ENCODE measurements at regions of chr10 and their contacts with region 1.

Region 1: GRCh38 chr10:23438550-23439441 is at the start of gene OTUD1:
- DNase-seq: peak; percentile 89 to 97 (median 95)
- H3K4me3 ChIP-seq: peak within 1 kb of the TSS; percentile 70 to 82
- H3K4me3 Mint-ChIP-seq: peak within 1 kb of the TSS; percentile 75 to 89 (median 84)
- H3K27ac ChIP-seq: peak within 1 kb of the TSS; percentile 79
- H3K27ac Mint-ChIP-seq: peak within 1 kb of the TSS; percentile 90 to 97 (median 94)
- H3K4me1 ChIP-seq: peaks cover 44% of the 10 kb centered on the region
- H3K4me1 Mint-ChIP-seq: peaks cover 30 to 44% (median 36%) of the 10 kb centered on the region in 4 donors
- H3K27me3 ChIP-seq: no peaks in the 10 kb centered on the region
- H3K27me3 Mint-ChIP-seq: no peaks in the 10 kb centered on the region
- total RNA-seq, gene OTUD1: 36.2 to 37.7 TPM

Region 2: DNA sequence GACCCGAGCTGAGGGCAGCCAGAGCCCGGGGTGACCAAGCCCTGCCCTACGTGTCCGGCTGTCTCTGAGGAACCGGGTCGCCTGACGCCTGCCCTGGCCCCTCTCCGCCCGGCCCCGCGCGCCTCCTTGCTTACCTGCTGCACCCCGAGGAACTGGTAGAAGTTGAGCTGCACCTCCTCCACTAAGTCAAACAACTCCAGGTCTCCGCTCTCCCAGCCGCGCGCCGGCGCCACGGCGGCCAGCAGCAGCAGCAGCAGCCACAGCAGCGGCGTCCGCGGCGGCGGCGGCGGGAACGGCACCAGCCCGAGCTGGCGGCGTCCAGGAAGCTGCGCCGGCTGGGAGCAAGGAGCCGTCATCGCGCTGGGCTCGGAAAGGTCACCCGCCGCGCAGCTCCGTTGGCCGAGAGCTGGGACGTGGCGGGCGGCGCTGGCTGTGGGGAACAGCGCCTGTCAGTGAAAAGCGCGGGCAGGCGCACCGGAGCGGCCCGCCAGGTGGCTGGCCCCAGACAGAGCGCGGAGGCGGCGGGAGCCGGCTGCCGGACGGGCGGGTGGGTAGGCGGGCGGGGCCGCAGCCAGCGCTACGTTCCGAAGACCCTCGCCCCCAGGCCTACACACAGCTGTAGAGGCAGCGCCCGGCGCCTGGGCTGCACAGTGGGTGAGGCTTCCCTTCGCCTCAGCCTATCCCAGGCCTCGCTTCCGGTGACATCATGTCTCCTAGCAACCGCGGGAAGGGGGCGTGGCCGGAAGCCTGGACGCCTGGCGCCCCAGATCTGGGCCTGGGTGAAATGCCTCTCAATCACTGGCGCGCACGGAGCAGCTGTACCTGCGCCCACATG is 1435.5 kb before region 1 on chr10 and contains the start of gene DNAJC1:
- CTCF ChIA-PET with region 1: no interaction called
- POLR2A ChIA-PET with region 1: no interaction called
- intact Hi-C with region 1: loop called (anchors 5 kb)
- DNase-seq: peak; percentile 96 to 98 (median 96)
- H3K4me3 ChIP-seq: peak within 1 kb of the TSS; percentile 62 to 89
- H3K4me3 Mint-ChIP-seq: peak within 1 kb of the TSS; percentile 94 to 100 (median 98)
- H3K27ac ChIP-seq: peak within 1 kb of the TSS; percentile 84
- H3K27ac Mint-ChIP-seq: peak within 1 kb of the TSS; percentile 91 to 99 (median 97)
- H3K4me1 ChIP-seq: peaks cover 26% of the 10 kb centered on the region
- H3K4me1 Mint-ChIP-seq: peaks cover 23 to 45% (median 34%) of the 10 kb centered on the region in 4 donors
- H3K27me3 ChIP-seq: peaks cover 3% of the 10 kb centered on the region
- H3K27me3 Mint-ChIP-seq: peaks cover 0 to 4% of the 10 kb centered on the region in 2 donors
- total RNA-seq, gene DNAJC1: 15.0 to 16.7 TPM

Region 3: DNA sequence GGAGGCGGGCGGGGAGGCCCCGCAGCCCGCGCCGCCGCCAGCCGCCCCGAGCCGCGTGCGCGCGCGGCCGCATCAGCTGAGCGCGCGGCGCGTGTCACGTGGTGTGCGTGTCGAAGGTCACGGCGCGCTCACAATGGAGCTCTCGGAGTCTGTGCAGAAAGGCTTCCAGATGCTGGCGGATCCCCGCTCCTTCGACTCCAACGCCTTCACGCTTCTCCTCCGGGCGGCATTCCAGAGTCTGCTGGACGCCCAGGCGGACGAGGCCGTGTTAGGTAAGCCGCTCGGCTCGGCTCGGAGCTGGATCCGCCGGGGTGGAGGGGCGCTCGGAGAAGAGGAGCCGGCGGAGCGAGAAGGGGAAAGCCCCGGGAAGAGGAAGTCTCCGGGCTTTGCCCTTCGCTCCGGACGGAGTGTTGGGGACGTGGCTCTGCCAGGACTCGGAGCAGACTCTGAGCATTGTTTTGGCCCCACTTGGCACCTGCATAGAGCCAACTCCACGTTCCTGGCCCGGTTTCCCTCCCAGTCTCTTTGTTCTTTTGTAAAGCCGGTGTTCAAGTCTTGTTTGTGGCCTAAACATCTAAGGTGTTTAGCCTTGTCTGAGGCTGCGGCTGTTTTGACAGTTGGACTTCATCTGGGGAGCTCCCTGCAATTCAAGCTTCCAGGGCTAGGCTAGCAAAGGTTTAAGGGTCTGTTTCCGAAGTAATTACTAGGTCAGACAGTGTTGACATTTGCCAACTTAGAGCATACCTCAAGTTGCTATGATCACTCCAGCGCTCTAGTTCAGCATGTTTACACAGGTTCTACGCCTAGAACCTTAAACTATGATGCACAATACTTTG is 1122.3 kb before region 1 on chr10 and contains the start of gene COMMD3:
- CTCF ChIA-PET with region 1: no interaction called
- POLR2A ChIA-PET with region 1: no interaction called
- intact Hi-C with region 1: loop called (anchors 5 kb)
- DNase-seq: peak; percentile 78 to 86 (median 82)
- H3K4me3 ChIP-seq: peak within 1 kb of the TSS; percentile 77 to 95
- H3K4me3 Mint-ChIP-seq: peak within 1 kb of the TSS; percentile 94 to 99 (median 98)
- H3K27ac ChIP-seq: peak within 1 kb of the TSS; percentile 71
- H3K27ac Mint-ChIP-seq: peak within 1 kb of the TSS; percentile 89 to 98 (median 98)
- H3K4me1 ChIP-seq: peaks cover 37% of the 10 kb centered on the region
- H3K4me1 Mint-ChIP-seq: peaks cover 22 to 50% (median 29%) of the 10 kb centered on the region in 4 donors
- H3K27me3 ChIP-seq: no peaks in the 10 kb centered on the region
- H3K27me3 Mint-ChIP-seq: peaks cover 3 to 4% of the 10 kb centered on the region in 2 donors
- total RNA-seq, gene COMMD3: 67.9 to 68.5 TPM

Region 4: GRCh38 chr10:23344241-23344841 is 94.5 kb before region 1 on chr10 and contains the start of gene C10orf67:
- CTCF ChIA-PET with region 1: interaction called, 3 read pairs
- POLR2A ChIA-PET with region 1: interaction called, 55 read pairs
- intact Hi-C with region 1: loop called (anchors 2 kb)
- DNase-seq: peak in 1 of 5 donors; percentile 24
- H3K4me3 ChIP-seq: peak within 1 kb of the TSS; percentile 56 to 57
- H3K4me3 Mint-ChIP-seq: peak within 1 kb of the TSS; percentile 88 to 95 (median 92)
- H3K27ac ChIP-seq: peak within 1 kb of the TSS; percentile 18
- H3K27ac Mint-ChIP-seq: peak within 1 kb of the TSS; percentile 36 to 96 (median 88)
- H3K4me1 ChIP-seq: peaks cover 49% of the 10 kb centered on the region
- H3K4me1 Mint-ChIP-seq: peaks cover 21 to 46% (median 40%) of the 10 kb centered on the region in 4 donors
- H3K27me3 ChIP-seq: no peaks in the 10 kb centered on the region
- H3K27me3 Mint-ChIP-seq: peaks cover 0 to 1% of the 10 kb centered on the region in 2 donors
- total RNA-seq, gene C10orf67: not detected

Region 5: GRCh38 chr10:23368816-23369640 is 69.8 kb before region 1 on chr10:
- CTCF ChIA-PET with region 1: interaction called, 3 read pairs
- POLR2A ChIA-PET with region 1: interaction called, 70 read pairs
- intact Hi-C with region 1: no loop called
- DNase-seq: peak in 4 of 5 donors; percentile 49 to 58 (median 54)
- H3K4me3 ChIP-seq: peak overlapping the region in 1 of 2 donors; percentile 23
- H3K4me3 Mint-ChIP-seq: peak overlapping the region; percentile 27 to 81 (median 76)
- H3K27ac ChIP-seq: no peak overlapping the region
- H3K27ac Mint-ChIP-seq: peak overlapping the region in 6 of 7 donors; percentile 36 to 77 (median 60)
- H3K4me1 ChIP-seq: peaks cover 54% of the 10 kb centered on the region
- H3K4me1 Mint-ChIP-seq: peaks cover 42 to 51% (median 46%) of the 10 kb centered on the region in 4 donors
- H3K27me3 ChIP-seq: no peaks in the 10 kb centered on the region
- H3K27me3 Mint-ChIP-seq: no peaks in the 10 kb centered on the region

Region 6: GRCh38 chr10:24724381-24725228 is 1285.8 kb after region 1 on chr10:
- CTCF ChIA-PET with region 1: no interaction called
- POLR2A ChIA-PET with region 1: no interaction called
- intact Hi-C with region 1: loop called (anchors 2 kb)
- DNase-seq: peak; percentile 91 to 95 (median 94)
- H3K4me3 ChIP-seq: peak overlapping the region; percentile 88 to 90
- H3K4me3 Mint-ChIP-seq: peak overlapping the region; percentile 93 to 95 (median 95)
- H3K27ac ChIP-seq: peak overlapping the region; percentile 71
- H3K27ac Mint-ChIP-seq: peak overlapping the region; percentile 89 to 94 (median 92)
- H3K4me1 ChIP-seq: peaks cover 24% of the 10 kb centered on the region
- H3K4me1 Mint-ChIP-seq: peaks cover 5 to 25% (median 16%) of the 10 kb centered on the region in 4 donors
- H3K27me3 ChIP-seq: no peaks in the 10 kb centered on the region
- H3K27me3 Mint-ChIP-seq: no peaks in the 10 kb centered on the region